ENCODE measurements at regions of chr9 and their contacts with region 1.

Region 1: GRCh38 chr9:124735121-124735520 is 36.0 kb downstream of the NR6A1 start:
- DNase-seq: no peak
- H3K4me3 Mint-ChIP-seq: no peak overlapping the region
- H3K27ac Mint-ChIP-seq: peak overlapping the region; percentile 34
- H3K4me1 Mint-ChIP-seq: peaks cover 17% of the 10 kb centered on the region
- H3K27me3 Mint-ChIP-seq: peaks cover 9% of the 10 kb centered on the region

Region 2: DNA sequence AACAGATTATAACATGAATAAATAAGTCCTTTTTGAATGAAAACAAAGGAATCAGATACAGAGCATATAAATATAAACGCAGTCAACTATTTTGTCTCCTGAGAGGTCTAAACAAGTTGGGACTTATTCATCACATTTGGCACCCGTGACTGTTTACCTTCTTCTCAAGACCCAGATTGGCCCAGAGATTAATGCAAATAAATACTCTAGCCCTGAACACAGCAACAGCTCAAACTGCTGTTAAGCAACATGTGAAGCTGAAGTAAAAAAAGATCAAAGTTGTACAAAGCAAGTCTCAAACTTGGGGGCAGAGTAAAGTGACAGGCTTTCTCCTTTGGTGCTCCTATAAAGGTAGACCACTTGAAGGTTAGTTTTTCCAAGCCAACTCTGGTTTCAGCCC is 132.9 kb before region 1 on chr9:
- CTCF ChIA-PET with region 1: no interaction called
- POLR2A ChIA-PET with region 1: no interaction called
- intact Hi-C with region 1: no loop called
- DNase-seq: no peak
- H3K4me3 Mint-ChIP-seq: no peak overlapping the region
- H3K27ac Mint-ChIP-seq: no peak overlapping the region
- H3K4me1 Mint-ChIP-seq: no peaks in the 10 kb centered on the region
- H3K27me3 Mint-ChIP-seq: peaks cover 11% of the 10 kb centered on the region

Region 3: GRCh38 chr9:124626276-124626675 is 108.8 kb before region 1 on chr9:
- CTCF ChIA-PET with region 1: no interaction called
- POLR2A ChIA-PET with region 1: no interaction called
- intact Hi-C with region 1: no loop called
- DNase-seq: no peak
- H3K4me3 Mint-ChIP-seq: no peak overlapping the region
- H3K27ac Mint-ChIP-seq: no peak overlapping the region
- H3K4me1 Mint-ChIP-seq: no peaks in the 10 kb centered on the region
- H3K27me3 Mint-ChIP-seq: no peaks in the 10 kb centered on the region

Region 4: GRCh38 chr9:124754289-124754688 is 19.2 kb after region 1 on chr9:
- CTCF ChIA-PET with region 1: no interaction called
- POLR2A ChIA-PET with region 1: no interaction called
- intact Hi-C with region 1: loop called (anchors 2 kb)
- DNase-seq: no peak
- H3K4me3 Mint-ChIP-seq: no peak overlapping the region
- H3K27ac Mint-ChIP-seq: no peak overlapping the region
- H3K4me1 Mint-ChIP-seq: peaks cover 15% of the 10 kb centered on the region
- H3K27me3 Mint-ChIP-seq: peaks cover 52% of the 10 kb centered on the region

Region 5: DNA sequence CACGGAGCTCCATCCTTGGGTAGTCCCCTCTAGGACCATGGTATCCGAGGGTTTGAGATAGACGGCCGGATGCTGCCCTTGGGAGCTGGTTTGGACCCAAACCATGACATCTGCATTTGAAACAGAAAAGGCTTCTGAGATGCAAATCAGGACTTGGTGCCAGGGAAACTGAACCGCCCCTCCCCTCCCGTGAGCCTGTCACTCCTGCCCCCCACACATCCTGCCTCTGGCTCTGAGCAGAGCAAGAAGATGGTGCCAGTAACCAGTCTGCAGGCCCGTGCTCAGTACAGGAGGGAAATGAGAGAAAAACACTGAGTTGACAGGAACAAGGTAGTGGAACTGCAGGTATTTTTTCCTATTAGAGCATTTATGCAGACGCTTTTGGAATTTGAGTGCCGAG is 145.4 kb after region 1 on chr9:
- CTCF ChIA-PET with region 1: no interaction called
- POLR2A ChIA-PET with region 1: no interaction called
- intact Hi-C with region 1: no loop called
- DNase-seq: no peak
- H3K4me3 Mint-ChIP-seq: no peak overlapping the region
- H3K27ac Mint-ChIP-seq: no peak overlapping the region
- H3K4me1 Mint-ChIP-seq: peaks cover 4% of the 10 kb centered on the region
- H3K27me3 Mint-ChIP-seq: no peaks in the 10 kb centered on the region

Region 6: GRCh38 chr9:125024917-125025316 is 289.8 kb after region 1 on chr9:
- CTCF ChIA-PET with region 1: no interaction called
- POLR2A ChIA-PET with region 1: no interaction called
- intact Hi-C with region 1: no loop called
- DNase-seq: no peak
- H3K4me3 Mint-ChIP-seq: no peak overlapping the region
- H3K27ac Mint-ChIP-seq: no peak overlapping the region
- H3K4me1 Mint-ChIP-seq: peaks cover 3% of the 10 kb centered on the region
- H3K27me3 Mint-ChIP-seq: no peaks in the 10 kb centered on the region

Measured in activated CD4-positive, alpha-beta memory T cell treated with anti-CD3 and anti-CD28 coated beads for 36 hours (primary cell).